ENCODE measurements at regions of chr17 and their contacts with region 1.

Region 1: DNA sequence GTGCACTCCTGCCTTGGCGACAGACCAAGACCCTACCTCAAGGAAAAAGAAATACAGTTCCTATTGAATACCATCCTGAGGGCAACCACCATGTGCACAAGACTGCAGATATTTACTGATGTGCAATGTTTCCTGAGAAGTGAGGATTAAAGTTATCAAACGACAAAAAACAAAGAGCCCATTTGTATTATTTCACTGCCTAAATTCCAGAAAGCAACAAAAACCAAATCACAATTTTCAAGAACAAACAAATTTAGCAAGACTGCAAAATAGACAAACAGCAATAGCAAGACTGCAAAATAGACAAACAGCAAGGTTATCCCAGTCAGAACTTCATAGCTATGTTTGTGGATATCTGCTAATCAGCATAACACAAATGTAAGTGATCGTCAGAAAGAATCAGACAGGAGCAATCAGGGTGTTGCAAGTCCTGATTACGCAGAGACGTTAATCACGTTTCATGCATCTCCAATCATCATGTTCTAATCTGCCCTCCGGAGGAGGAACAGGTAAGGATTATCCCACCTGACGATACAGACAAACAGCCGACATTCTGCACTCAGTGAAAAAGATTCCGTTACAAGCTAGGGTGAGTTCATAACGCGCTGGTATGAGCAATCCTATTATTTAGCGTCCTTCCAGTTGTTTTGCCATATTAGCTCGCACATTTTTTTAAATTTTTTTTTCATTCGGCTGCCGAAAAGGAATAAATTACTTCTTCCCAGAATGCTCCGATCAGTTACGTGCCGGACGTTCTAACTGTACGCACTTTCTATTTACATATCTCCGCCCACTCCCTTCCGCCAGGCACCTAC is 2.9 kb downstream of the TMEM107 start:
- DNase-seq: peak; percentile 64 to 82 (median 71)
- H3K4me3 ChIP-seq: peak overlapping the region; percentile 40
- H3K27ac ChIP-seq: peak overlapping the region; percentile 89 to 91
- H3K4me1 ChIP-seq: peaks cover 6% of the 10 kb centered on the region
- H3K27me3 ChIP-seq: no peaks in the 10 kb centered on the region
- CTCF ChIP-seq: no peak
- EP300 ChIP-seq: peak; percentile 57
- POLR2A ChIP-seq: peak; percentile 97

Region 2: DNA sequence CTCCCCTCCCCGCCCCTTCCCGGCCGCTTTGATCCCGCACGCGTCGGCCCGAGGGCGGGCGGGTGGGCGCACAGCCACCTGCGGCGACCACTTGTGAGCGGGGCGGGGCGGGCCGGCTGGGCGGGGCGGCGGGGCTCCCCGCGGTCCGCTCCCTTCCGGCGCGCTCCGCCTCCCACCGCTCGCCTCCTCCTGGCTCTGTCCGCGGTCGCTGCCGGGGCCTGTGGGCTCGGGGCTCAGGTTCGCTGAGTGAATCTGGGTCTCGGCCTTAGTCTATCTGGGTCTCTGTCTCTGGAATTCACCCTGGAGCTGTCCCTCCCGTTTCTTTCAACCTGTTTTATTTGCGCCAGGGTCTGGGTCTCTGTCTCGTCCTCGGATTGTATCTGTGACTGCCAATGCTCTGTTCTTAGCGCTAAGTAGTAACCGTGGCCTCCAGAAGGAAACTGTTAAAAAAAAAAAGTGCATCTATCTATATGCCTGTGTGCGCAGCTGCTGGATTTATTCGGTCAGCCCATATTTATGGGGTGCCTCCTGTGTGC is 46.7 kb before region 1 on chr17:
- intact Hi-C with region 1: loop called in 2 of 4 experiments (anchors 1 to 5 kb)
- DNase-seq: peak; percentile 50 to 69 (median 56)
- H3K4me3 ChIP-seq: peak overlapping the region; percentile 46
- H3K27ac ChIP-seq: peak overlapping the region; percentile 35 to 40
- H3K4me1 ChIP-seq: peaks cover 11% of the 10 kb centered on the region
- H3K27me3 ChIP-seq: no peaks in the 10 kb centered on the region
- CTCF ChIP-seq: no peak
- EP300 ChIP-seq: no peak
- POLR2A ChIP-seq: no peak